B cell (primary cell): ENCODE measurements at regions of chr20 and their contacts with region 1.

Region 1: GRCh38 chr20:35699127-35699975 is at the starts of genes NFS1 and ROMO1:
- DNase-seq: peak; percentile 92
- ATAC-seq: peak; percentile 88
- H3K4me3 ChIP-seq: peak within 1 kb of the TSS; percentile 69 to 98 (median 91)
- H3K4me3 Mint-ChIP-seq: peak within 1 kb of the TSS; percentile 85
- H3K27ac ChIP-seq: peak within 1 kb of the TSS; percentile 84 to 96
- H3K27ac Mint-ChIP-seq: peak within 1 kb of the TSS; percentile 97
- H3K4me1 ChIP-seq: peaks cover 17 to 23% of the 10 kb centered on the region in 2 donors
- H3K4me1 Mint-ChIP-seq: peaks cover 33% of the 10 kb centered on the region
- H3K27me3 ChIP-seq: no peaks in the 10 kb centered on the region
- H3K27me3 Mint-ChIP-seq: no peaks in the 10 kb centered on the region
- CTCF ChIP-seq: peak; percentile 31
- total RNA-seq, gene NFS1: 29.0 and 29.4 TPM in 2 replicates
- total RNA-seq, gene ROMO1: 33.2 and 38.1 TPM in 2 replicates

Region 2: GRCh38 chr20:35601008-35601973 is 98.1 kb before region 1 on chr20:
- CTCF ChIA-PET with region 1: interaction called, 7 read pairs
- POLR2A ChIA-PET with region 1: no interaction called
- intact Hi-C with region 1: loop called (anchors 5 kb)
- DNase-seq: peak; percentile 88
- ATAC-seq: peak; percentile 78
- H3K4me3 ChIP-seq: peak overlapping the region in 4 of 5 experiments; percentile 40 to 77 (median 58)
- H3K4me3 Mint-ChIP-seq: peak overlapping the region; percentile 89
- H3K27ac ChIP-seq: no peak overlapping the region
- H3K27ac Mint-ChIP-seq: no peak overlapping the region
- H3K4me1 ChIP-seq: peaks cover 16 to 17% of the 10 kb centered on the region in 2 donors
- H3K4me1 Mint-ChIP-seq: peaks cover 12% of the 10 kb centered on the region
- H3K27me3 ChIP-seq: peaks cover 0 to 40% (median 15%) of the 10 kb centered on the region in 4 experiments
- H3K27me3 Mint-ChIP-seq: peaks cover 44% of the 10 kb centered on the region
- CTCF ChIP-seq: peak; percentile 48

Region 3: DNA sequence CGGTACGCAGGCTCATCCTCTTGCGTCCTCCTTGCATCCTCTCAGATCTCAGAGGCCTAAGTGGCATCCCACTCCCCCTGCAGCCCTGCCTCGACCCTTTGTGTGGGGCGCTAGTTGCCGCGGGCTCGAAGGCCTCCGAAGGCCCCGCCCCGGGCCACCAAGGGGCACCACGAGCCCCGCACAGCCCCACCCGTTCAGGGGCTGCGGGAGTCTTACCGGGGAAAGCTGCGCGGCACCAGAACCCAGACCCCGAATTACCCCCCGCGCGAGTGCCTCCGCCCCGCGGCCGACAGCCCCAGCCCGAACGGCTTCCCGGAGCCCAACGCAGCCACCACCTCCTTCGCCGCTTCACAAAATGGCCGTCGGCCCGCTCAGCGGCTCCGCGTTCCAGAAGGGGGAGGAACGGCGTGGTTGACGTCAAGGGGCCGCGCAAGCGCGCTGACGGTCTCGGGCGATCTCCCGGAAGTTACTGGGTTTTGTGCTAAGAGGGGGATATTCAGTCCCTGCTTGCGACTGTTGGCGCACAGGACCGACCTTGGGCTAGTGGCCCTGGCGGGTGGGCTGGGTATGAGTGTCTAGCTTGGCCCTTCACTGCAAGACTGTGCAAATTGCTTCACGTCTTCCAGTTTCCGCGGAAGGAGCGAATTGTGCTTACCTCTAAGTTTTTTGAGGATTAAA is 34.7 kb before region 1 on chr20 and contains the starts of genes CPNE1 and RBM12:
- CTCF ChIA-PET with region 1: interaction called, 3 read pairs
- POLR2A ChIA-PET with region 1: interaction called, 6 read pairs
- intact Hi-C with region 1: loop called (anchors 1 kb)
- DNase-seq: peak; percentile 96
- ATAC-seq: peak; percentile 77
- H3K4me3 ChIP-seq: peak within 1 kb of the TSS; percentile 76 to 98 (median 90)
- H3K4me3 Mint-ChIP-seq: peak within 1 kb of the TSS; percentile 92
- H3K27ac ChIP-seq: peak within 1 kb of the TSS; percentile 96 to 97
- H3K27ac Mint-ChIP-seq: peak within 1 kb of the TSS; percentile 100
- H3K4me1 ChIP-seq: peaks cover 39 to 42% of the 10 kb centered on the region in 2 donors
- H3K4me1 Mint-ChIP-seq: peaks cover 48% of the 10 kb centered on the region
- H3K27me3 ChIP-seq: no peaks in the 10 kb centered on the region
- H3K27me3 Mint-ChIP-seq: no peaks in the 10 kb centered on the region
- CTCF ChIP-seq: no peak
- total RNA-seq, gene CPNE1: 323 and 331 TPM in 2 replicates
- total RNA-seq, gene RBM12: 144 and 145 TPM in 2 replicates

Region 4: GRCh38 chr20:35680452-35681183 is 18.7 kb before region 1 on chr20:
- CTCF ChIA-PET with region 1: no interaction called
- POLR2A ChIA-PET with region 1: no interaction called
- intact Hi-C with region 1: no loop called
- DNase-seq: no peak
- ATAC-seq: peak; percentile 70
- H3K4me3 ChIP-seq: no peak overlapping the region
- H3K4me3 Mint-ChIP-seq: peak overlapping the region; percentile 36
- H3K27ac ChIP-seq: peak overlapping the region; percentile 19 to 24
- H3K27ac Mint-ChIP-seq: peak overlapping the region; percentile 62
- H3K4me1 ChIP-seq: peaks cover 10% of the 10 kb centered on the region in 2 donors
- H3K4me1 Mint-ChIP-seq: peaks cover 16% of the 10 kb centered on the region
- H3K27me3 ChIP-seq: no peaks in the 10 kb centered on the region
- H3K27me3 Mint-ChIP-seq: no peaks in the 10 kb centered on the region
- CTCF ChIP-seq: no peak